ENCODE measurements at regions of chr14 and their contacts with region 1.

Region 1: GRCh38 chr14:94337274-94337673 is 14.1 kb upstream of the SERPINA6 start:
- DNase-seq: peak; percentile 71
- H3K4me3 ChIP-seq: no peak overlapping the region
- H3K27ac ChIP-seq: no peak overlapping the region
- H3K4me1 ChIP-seq: peaks cover 12% of the 10 kb centered on the region
- H3K27me3 ChIP-seq: no peaks in the 10 kb centered on the region
- CTCF ChIP-seq: no peak

Region 2: DNA sequence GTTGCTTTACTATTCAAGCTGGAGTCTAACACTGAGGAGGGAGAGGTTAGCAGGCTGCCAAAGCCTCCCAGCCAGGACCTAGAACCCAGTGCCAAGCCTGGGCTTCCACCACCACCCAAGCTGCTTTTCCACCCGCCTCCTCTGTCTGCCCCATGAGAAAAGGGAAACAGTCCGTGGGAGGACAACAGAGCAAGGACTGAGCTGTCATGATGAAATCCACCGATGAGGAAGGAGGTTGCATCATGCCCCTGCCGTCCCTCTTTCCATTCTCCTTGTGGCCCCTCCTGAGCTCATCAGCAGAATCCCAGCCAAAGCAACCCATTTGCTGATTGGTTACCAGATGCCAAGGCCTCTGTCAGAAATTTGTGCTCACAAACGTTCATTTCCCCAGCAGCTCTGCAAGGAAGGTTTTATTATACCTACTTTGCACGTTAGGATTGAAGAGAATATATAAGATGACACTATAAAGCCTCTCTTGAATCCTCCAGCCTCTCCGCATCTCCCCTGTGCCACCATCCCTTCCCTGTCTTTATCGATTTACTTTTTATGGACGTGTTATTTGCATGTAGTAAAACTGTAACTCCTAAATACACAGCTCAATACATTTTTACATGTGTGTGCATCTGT is 57.4 kb after region 1 on chr14:
- CTCF ChIA-PET with region 1: no interaction called
- dilution Hi-C with region 1: loop called (anchors 5 kb)
- in situ Hi-C with region 1: no loop called
- intact Hi-C with region 1: no loop called
- DNase-seq: peak; percentile 47
- H3K4me3 ChIP-seq: no peak overlapping the region
- H3K27ac ChIP-seq: no peak overlapping the region
- H3K4me1 ChIP-seq: peaks cover 25% of the 10 kb centered on the region
- H3K27me3 ChIP-seq: no peaks in the 10 kb centered on the region
- CTCF ChIP-seq: no peak

Measured in mammary epithelial cell (primary cell).